ENCODE measurements at regions of chr14 and their contacts with region 1.

Region 1: GRCh38 chr14:106013879-106014376 is 487.5 kb downstream of the TMEM121 start:
- DNase-seq: peak; percentile 66
- H3K4me3 Mint-ChIP-seq: peak overlapping the region; percentile 75
- H3K27ac Mint-ChIP-seq: peak overlapping the region; percentile 100
- H3K4me1 Mint-ChIP-seq: peaks cover 81% of the 10 kb centered on the region
- H3K27me3 Mint-ChIP-seq: no peaks in the 10 kb centered on the region

Region 2: GRCh38 chr14:105793836-105794235 is 220.1 kb before region 1 on chr14:
- CTCF ChIA-PET with region 1: no interaction called
- intact Hi-C with region 1: no loop called
- DNase-seq: no peak
- H3K4me3 Mint-ChIP-seq: no peak overlapping the region
- H3K27ac Mint-ChIP-seq: no peak overlapping the region
- H3K4me1 Mint-ChIP-seq: no peaks in the 10 kb centered on the region
- H3K27me3 Mint-ChIP-seq: peaks cover 32% of the 10 kb centered on the region

Region 3: GRCh38 chr14:105999361-106000028 is 14.4 kb before region 1 on chr14:
- CTCF ChIA-PET with region 1: interaction called, 54 read pairs
- intact Hi-C with region 1: no loop called
- DNase-seq: peak; percentile 96
- H3K4me3 Mint-ChIP-seq: peak overlapping the region; percentile 60
- H3K27ac Mint-ChIP-seq: peak overlapping the region; percentile 75
- H3K4me1 Mint-ChIP-seq: peaks cover 45% of the 10 kb centered on the region
- H3K27me3 Mint-ChIP-seq: no peaks in the 10 kb centered on the region

Region 4: DNA sequence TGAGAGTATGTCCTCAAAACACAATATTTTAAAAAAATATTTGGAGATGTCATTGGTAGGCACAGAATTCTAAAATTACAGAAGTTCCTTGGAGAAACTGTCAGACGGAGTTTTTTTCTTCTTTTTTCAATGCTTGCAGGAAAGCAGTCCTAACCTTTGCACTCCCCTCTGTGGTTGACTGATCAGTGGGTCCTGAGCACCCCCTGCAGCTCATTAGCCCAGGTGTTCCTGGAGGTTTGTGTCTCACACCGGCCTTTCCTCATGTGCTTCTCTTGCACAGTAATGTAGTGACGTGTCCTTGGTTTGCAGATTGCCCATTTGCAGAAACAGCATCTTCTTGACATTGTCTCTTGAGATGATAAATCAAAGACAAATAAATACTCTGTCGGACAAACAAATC is 25.5 kb after region 1 on chr14:
- CTCF ChIA-PET with region 1: interaction called, 12 read pairs
- intact Hi-C with region 1: loop called (anchors 1 kb)
- DNase-seq: peak; percentile 87
- H3K4me3 Mint-ChIP-seq: no peak overlapping the region
- H3K27ac Mint-ChIP-seq: peak overlapping the region; percentile 11
- H3K4me1 Mint-ChIP-seq: peaks cover 39% of the 10 kb centered on the region
- H3K27me3 Mint-ChIP-seq: peaks cover 2% of the 10 kb centered on the region

Region 5: GRCh38 chr14:106062502-106063272 is 48.8 kb after region 1 on chr14:
- CTCF ChIA-PET with region 1: interaction called, 8 read pairs
- intact Hi-C with region 1: loop called (anchors 5 kb)
- DNase-seq: no peak
- H3K4me3 Mint-ChIP-seq: no peak overlapping the region
- H3K27ac Mint-ChIP-seq: no peak overlapping the region
- H3K4me1 Mint-ChIP-seq: peaks cover 15% of the 10 kb centered on the region
- H3K27me3 Mint-ChIP-seq: peaks cover 9% of the 10 kb centered on the region

Region 6: DNA sequence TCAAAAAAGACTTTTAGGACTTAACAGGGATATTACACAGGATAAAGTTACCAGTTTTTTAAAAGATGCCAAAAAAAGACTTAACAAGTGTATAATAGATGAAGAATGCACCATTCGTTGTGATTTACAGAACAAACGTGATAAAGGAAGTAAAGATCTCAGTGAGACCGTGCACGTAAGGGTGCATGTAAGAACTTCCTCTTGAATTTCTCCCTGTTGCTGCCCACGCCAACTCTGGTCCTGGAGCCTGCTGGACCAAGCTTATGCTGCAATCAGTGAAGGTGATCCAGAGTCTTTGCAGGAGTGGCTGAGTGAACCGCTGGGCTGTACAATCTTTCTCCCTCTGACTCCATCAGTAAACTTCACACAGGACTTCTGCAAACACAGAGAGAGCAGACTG is 106.2 kb after region 1 on chr14:
- CTCF ChIA-PET with region 1: no interaction called
- intact Hi-C with region 1: no loop called
- DNase-seq: no peak
- H3K4me3 Mint-ChIP-seq: peak overlapping the region; percentile 63
- H3K27ac Mint-ChIP-seq: no peak overlapping the region
- H3K4me1 Mint-ChIP-seq: peaks cover 37% of the 10 kb centered on the region
- H3K27me3 Mint-ChIP-seq: peaks cover 7% of the 10 kb centered on the region

Region 7: GRCh38 chr14:106766145-106766544 is 752.2 kb after region 1 on chr14:
- CTCF ChIA-PET with region 1: no interaction called
- intact Hi-C with region 1: loop called (anchors 5 kb)
- DNase-seq: no peak
- H3K4me3 Mint-ChIP-seq: no peak overlapping the region
- H3K27ac Mint-ChIP-seq: no peak overlapping the region
- H3K4me1 Mint-ChIP-seq: peaks cover 34% of the 10 kb centered on the region
- H3K27me3 Mint-ChIP-seq: no peaks in the 10 kb centered on the region